HCT116 (cell line): ENCODE measurements at regions of chr19 and their contacts with region 1.

Region 1: GRCh38 chr19:54674021-54674617 is 11.3 kb downstream of the LILRB4 start:
- DNase-seq: peak; percentile 34
- ATAC-seq: peak; percentile 61
- H3K4me3 ChIP-seq: no peak overlapping the region
- H3K27ac ChIP-seq: no peak overlapping the region
- H3K4me1 ChIP-seq: no peaks in the 10 kb centered on the region
- H3K27me3 ChIP-seq: peaks cover 32% of the 10 kb centered on the region
- CTCF ChIP-seq: peak; percentile 53 to 87 (median 80); a peak in 5 of 6 replicates
- POLR2A ChIP-seq: no peak
- RAD21 ChIP-seq: peak; percentile 61

Region 2: GRCh38 chr19:54481322-54481930 is 192.7 kb before region 1 on chr19:
- CTCF ChIA-PET with region 1: interaction called, 12 read pairs
- POLR2A ChIA-PET with region 1: no interaction called
- RAD21 ChIA-PET with region 1: interaction called in 1 of 2 experiments, 3 read pairs
- intact Hi-C with region 1: loop called (anchors 5 kb)
- DNase-seq: peak; percentile 32
- ATAC-seq: peak; percentile 72
- H3K4me3 ChIP-seq: no peak overlapping the region
- H3K27ac ChIP-seq: no peak overlapping the region
- H3K4me1 ChIP-seq: no peaks in the 10 kb centered on the region
- H3K27me3 ChIP-seq: 0 out of 2 replicates have a peak, but pooled peaks cover 3% of the 10 kb centered on the region
- CTCF ChIP-seq: peak; percentile 49 to 70 (median 70); a peak in 5 of 6 replicates
- POLR2A ChIP-seq: no peak
- RAD21 ChIP-seq: peak; percentile 63

Region 3: GRCh38 chr19:54653181-54653809 is 20.8 kb before region 1 on chr19:
- CTCF ChIA-PET with region 1: interaction called, 28 read pairs
- POLR2A ChIA-PET with region 1: no interaction called
- RAD21 ChIA-PET with region 1: no interaction called
- intact Hi-C with region 1: no loop called
- DNase-seq: peak; percentile 31
- ATAC-seq: peak; percentile 84
- H3K4me3 ChIP-seq: no peak overlapping the region
- H3K27ac ChIP-seq: no peak overlapping the region
- H3K4me1 ChIP-seq: no peaks in the 10 kb centered on the region
- H3K27me3 ChIP-seq: peaks cover 8% of the 10 kb centered on the region; the same call in 1 of the 2 replicates
- CTCF ChIP-seq: peak; percentile 44 to 59 (median 56); a peak in 5 of 6 replicates
- POLR2A ChIP-seq: no peak
- RAD21 ChIP-seq: peak; percentile 61

Region 4: DNA sequence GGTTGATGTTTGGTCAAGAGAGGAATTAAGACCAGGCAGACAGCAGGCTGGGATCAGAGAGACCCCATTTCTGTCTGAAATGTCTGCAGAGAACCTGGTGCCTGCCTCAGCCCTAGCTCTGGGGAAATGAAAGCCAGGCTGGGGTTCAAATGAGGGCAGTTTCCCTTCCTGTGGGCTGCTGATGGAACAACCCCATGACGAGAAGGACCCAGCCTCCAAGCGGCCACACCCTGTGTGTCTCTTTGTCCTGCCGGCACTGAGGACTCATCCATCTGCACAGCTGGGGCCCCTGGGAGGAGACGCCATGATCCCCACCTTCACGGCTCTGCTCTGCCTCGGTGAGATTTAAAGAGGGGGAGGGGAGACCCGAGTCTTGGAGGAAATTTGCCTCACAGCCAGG is 11.4 kb before region 1 on chr19 and contains the start of gene LILRB4:
- CTCF ChIA-PET with region 1: interaction called, 12 read pairs
- POLR2A ChIA-PET with region 1: interaction called, 3 read pairs
- RAD21 ChIA-PET with region 1: no interaction called
- intact Hi-C with region 1: no loop called
- DNase-seq: no peak
- ATAC-seq: no peak
- H3K4me3 ChIP-seq: no peak within 1 kb of the TSS
- H3K27ac ChIP-seq: no peak within 1 kb of the TSS
- H3K4me1 ChIP-seq: no peaks in the 10 kb centered on the region
- H3K27me3 ChIP-seq: peaks cover 12% of the 10 kb centered on the region; the same call in 1 of the 2 replicates
- CTCF ChIP-seq: no peak
- POLR2A ChIP-seq: no peak
- RAD21 ChIP-seq: no peak
- total RNA-seq, gene LILRB4: not detected

Region 5: DNA sequence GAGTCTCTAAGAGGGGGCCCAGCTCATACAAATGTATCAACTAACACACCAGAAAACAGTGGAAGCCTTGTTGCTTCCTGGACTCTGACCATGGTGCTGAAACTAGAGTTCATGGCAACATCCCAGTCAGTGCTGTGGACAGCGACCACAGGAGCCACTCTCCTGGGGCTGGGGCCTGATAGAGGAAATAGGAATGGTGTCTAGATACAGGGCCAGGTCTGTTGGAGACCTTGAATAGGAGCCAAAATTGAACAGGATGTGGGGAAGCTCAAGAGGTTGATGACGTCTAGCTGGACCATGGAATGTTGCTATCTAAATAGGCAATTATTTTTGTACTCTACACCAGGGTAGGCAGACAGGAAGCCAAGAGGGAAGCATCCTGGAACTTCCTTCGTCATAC is 10.4 kb after region 1 on chr19:
- CTCF ChIA-PET with region 1: interaction called, 20 read pairs
- POLR2A ChIA-PET with region 1: no interaction called
- RAD21 ChIA-PET with region 1: no interaction called
- intact Hi-C with region 1: no loop called
- DNase-seq: no peak
- ATAC-seq: peak; percentile 53; the same call in 1 of the 2 replicates
- H3K4me3 ChIP-seq: no peak overlapping the region
- H3K27ac ChIP-seq: no peak overlapping the region
- H3K4me1 ChIP-seq: no peaks in the 10 kb centered on the region
- H3K27me3 ChIP-seq: peaks cover 31% of the 10 kb centered on the region
- CTCF ChIP-seq: no peak
- POLR2A ChIP-seq: no peak
- RAD21 ChIP-seq: no peak

Region 6: GRCh38 chr19:54694648-54695047 is 20.5 kb after region 1 on chr19:
- CTCF ChIA-PET with region 1: no interaction called
- POLR2A ChIA-PET with region 1: no interaction called
- RAD21 ChIA-PET with region 1: no interaction called
- intact Hi-C with region 1: no loop called
- DNase-seq: no peak
- ATAC-seq: no peak
- H3K4me3 ChIP-seq: no peak overlapping the region
- H3K27ac ChIP-seq: no peak overlapping the region
- H3K4me1 ChIP-seq: no peaks in the 10 kb centered on the region
- H3K27me3 ChIP-seq: peaks cover 19% of the 10 kb centered on the region
- CTCF ChIP-seq: no peak
- POLR2A ChIP-seq: no peak
- RAD21 ChIP-seq: no peak

Region 7: DNA sequence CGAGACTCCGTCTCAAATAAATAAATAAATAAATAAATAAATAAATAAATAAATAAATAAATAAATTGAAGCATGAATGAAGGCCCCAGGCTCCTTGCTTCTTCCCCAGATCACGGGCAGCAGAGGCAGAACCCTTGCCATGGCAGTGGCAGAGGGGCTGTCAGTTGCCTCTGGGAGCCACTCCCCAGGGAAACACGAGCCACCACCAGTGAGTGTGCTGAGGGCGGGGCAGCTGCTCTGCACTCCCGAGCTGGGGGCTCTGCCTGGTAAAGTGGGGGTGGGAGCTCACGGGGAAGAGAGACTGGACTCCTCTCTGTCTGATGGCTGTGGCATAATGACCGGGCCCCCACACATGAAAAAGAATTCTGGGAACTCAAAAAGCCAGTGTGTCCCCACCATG is 207.7 kb after region 1 on chr19:
- CTCF ChIA-PET with region 1: interaction called, 10 read pairs
- POLR2A ChIA-PET with region 1: no interaction called
- RAD21 ChIA-PET with region 1: no interaction called
- intact Hi-C with region 1: no loop called
- DNase-seq: no peak
- ATAC-seq: no peak
- H3K4me3 ChIP-seq: no peak overlapping the region
- H3K27ac ChIP-seq: no peak overlapping the region
- H3K4me1 ChIP-seq: no peaks in the 10 kb centered on the region
- H3K27me3 ChIP-seq: peaks cover 8% of the 10 kb centered on the region; the same call in 1 of the 2 replicates
- CTCF ChIP-seq: no peak
- POLR2A ChIP-seq: no peak
- RAD21 ChIP-seq: no peak

Region 8: GRCh38 chr19:54916822-54917221 is 242.7 kb after region 1 on chr19:
- CTCF ChIA-PET with region 1: no interaction called
- POLR2A ChIA-PET with region 1: no interaction called
- RAD21 ChIA-PET with region 1: no interaction called
- intact Hi-C with region 1: loop called (anchors 1 kb)
- DNase-seq: no peak
- ATAC-seq: no peak
- H3K4me3 ChIP-seq: no peak overlapping the region
- H3K27ac ChIP-seq: no peak overlapping the region
- H3K4me1 ChIP-seq: no peaks in the 10 kb centered on the region
- H3K27me3 ChIP-seq: no peaks in the 10 kb centered on the region
- CTCF ChIP-seq: no peak
- POLR2A ChIP-seq: no peak
- RAD21 ChIP-seq: no peak